ENCODE measurements at regions of chr3 and their contacts with region 1.

Region 1: DNA sequence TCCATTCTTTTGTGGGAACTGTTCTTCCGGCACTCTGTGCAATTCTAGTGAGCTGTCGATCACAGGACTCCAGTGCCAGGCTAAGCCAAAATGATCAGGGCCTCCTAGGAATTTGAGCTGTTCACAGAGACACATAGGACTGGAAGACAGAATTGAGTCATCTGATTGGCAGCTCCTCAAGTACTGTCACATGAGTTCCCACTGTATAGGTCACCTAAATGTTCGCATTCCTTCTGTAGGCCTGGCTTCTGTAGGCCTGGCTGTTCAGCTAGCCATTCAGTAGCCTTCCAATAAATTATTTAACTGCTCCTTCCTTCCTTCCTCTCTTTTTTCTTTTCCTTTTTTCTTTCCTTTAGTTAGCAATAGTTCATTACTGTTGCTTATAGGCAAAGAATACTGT is 4.3 kb downstream of the PROS1 start:
- DNase-seq: no peak
- ATAC-seq: no peak
- H3K4me3 ChIP-seq: no peak overlapping the region
- H3K27ac ChIP-seq: no peak overlapping the region
- H3K4me1 ChIP-seq: peaks cover 3% of the 10 kb centered on the region in 2 donors
- H3K27me3 ChIP-seq: no peaks in the 10 kb centered on the region
- CTCF ChIP-seq: no peak
- POLR2A ChIP-seq: no peak

Region 2: GRCh38 chr3:93926789-93927188 is 42.7 kb before region 1 on chr3:
- in situ Hi-C with region 1: loop called in 1 of 4 experiments (anchors 5 kb)
- intact Hi-C with region 1: no loop called
- DNase-seq: no peak
- ATAC-seq: no peak
- H3K4me3 ChIP-seq: no peak overlapping the region
- H3K27ac ChIP-seq: no peak overlapping the region
- H3K4me1 ChIP-seq: no peaks in the 10 kb centered on the region
- H3K27me3 ChIP-seq: no peaks in the 10 kb centered on the region
- CTCF ChIP-seq: no peak
- POLR2A ChIP-seq: no peak